Right cardiac atrium (tissue), 5 donors: ENCODE measurements at regions of chr9 and their contacts with region 1.

Region 1: GRCh38 chr9:121557581-121558447 is 58.2 kb upstream of the GGTA1 start:
- DNase-seq: peak; percentile 75 to 89 (median 85)
- ATAC-seq: peak; percentile 89 to 90
- H3K4me3 ChIP-seq: no peak overlapping the region
- H3K27ac ChIP-seq: peak overlapping the region; percentile 77
- H3K4me1 ChIP-seq: peaks cover 10% of the 10 kb centered on the region
- H3K27me3 ChIP-seq: no peaks in the 10 kb centered on the region

Region 2: DNA sequence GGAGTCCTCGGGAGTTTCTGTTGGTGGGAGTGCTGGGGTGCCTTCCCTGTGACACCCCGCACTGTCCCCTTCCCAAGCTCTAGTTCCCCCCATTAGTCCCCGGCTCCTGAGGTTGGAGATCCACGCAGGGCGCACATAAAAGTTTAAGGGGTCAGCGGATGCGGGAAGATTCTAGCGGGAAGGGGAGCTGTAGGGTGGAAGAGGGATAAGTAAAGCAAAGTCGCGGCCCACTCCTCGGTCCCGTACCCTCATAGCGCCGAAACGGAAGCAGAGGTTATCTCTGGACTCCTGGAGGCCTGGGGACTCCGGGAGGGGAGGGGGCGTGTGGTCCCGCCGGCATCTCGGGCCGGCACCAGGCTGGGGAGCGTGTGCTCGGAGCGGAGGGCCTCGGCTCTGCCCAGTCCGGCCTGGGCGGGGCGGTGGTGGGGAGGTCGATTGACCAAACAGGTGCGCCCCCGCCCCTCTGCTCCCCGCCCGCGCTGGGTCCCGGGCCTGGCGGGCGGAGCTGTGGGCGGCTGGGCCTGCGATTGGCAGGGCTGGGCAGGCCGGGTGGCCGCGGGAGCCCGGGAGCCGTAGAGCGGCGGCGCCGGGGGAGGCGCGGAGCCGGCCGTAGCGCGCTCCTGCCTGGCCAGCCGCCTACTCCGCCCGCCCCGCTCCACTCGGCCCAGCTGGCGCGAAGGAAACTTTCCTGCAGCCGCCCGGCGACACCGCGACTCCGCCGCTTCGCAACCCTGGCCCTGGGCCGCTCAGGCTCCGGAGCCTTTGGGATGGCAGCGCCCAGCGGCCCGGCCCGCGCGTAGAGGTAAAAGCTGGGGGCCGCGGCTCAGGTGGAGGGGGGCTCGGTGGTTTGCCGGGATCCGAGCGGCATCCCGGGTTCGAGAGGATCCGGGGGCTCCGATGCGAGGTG is 41.4 kb after region 1 on chr9:
- intact Hi-C with region 1: loop called in 1 of 4 experiments (anchors 5 kb)
- DNase-seq: peak; percentile 78 to 91 (median 89)
- ATAC-seq: peak; percentile 88 to 90
- H3K4me3 ChIP-seq: peak overlapping the region; percentile 65
- H3K27ac ChIP-seq: peak overlapping the region; percentile 77
- H3K4me1 ChIP-seq: peaks cover 10% of the 10 kb centered on the region
- H3K27me3 ChIP-seq: no peaks in the 10 kb centered on the region